ENCODE measurements at regions of chr17 and their contacts with region 1.

Region 1: DNA sequence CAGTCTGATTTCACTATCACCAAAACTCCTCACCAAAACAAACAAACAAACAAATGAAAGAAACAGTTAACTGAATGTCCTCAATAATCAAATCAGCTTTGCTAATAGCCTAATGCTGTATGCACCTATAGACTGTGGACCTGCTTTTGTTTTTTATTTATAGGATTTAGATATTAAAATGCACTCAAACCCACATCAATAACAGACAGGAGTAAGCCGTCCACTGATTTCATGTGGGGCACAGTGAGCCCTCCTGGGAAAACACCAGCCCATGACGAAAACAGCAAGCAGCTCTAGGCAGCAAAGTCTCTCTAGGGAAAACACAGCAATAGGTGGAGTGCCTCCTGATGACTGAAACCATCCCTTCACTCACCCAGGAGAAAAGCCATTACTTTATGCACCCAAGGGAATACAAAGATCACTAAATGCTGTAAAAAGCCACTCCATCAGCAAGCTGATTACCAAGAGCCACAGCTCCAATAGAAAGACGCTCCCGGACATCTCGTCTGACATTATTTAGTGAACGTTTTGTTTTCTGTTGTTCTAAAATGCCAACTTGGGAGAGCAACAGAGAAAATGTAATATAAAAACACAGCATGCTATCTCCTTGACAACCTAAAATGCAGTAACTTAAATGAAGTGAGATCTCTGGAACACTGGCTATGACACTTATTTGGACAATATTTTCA is 47.8 kb downstream of the ANKFY1 start:
- DNase-seq: no peak
- H3K4me3 ChIP-seq: no peak overlapping the region
- H3K27ac ChIP-seq: no peak overlapping the region
- H3K4me1 ChIP-seq: no peaks in the 10 kb centered on the region
- H3K27me3 ChIP-seq: no peaks in the 10 kb centered on the region
- CTCF ChIP-seq: no peak
- POLR2A ChIP-seq: no peak

Region 2: GRCh38 chr17:4263282-4264215 is 47.5 kb after region 1 on chr17 and contains the start of gene ANKFY1:
- intact Hi-C with region 1: loop called (anchors 10 kb)
- DNase-seq: peak; percentile 95 to 97
- H3K4me3 ChIP-seq: peak within 1 kb of the TSS; percentile 91 to 99 (median 98)
- H3K27ac ChIP-seq: peak within 1 kb of the TSS; percentile 30 to 70 (median 63)
- H3K4me1 ChIP-seq: peaks cover 12 to 19% of the 10 kb centered on the region in 2 donors
- H3K27me3 ChIP-seq: no peaks in the 10 kb centered on the region
- CTCF ChIP-seq: peak in 1 of 6 experiments; percentile 29
- POLR2A ChIP-seq: peak in 1 of 2 donors; percentile 75
- total RNA-seq, gene ANKFY1: 36.8 to 51.3 (median 46.3) TPM

Region 3: DNA sequence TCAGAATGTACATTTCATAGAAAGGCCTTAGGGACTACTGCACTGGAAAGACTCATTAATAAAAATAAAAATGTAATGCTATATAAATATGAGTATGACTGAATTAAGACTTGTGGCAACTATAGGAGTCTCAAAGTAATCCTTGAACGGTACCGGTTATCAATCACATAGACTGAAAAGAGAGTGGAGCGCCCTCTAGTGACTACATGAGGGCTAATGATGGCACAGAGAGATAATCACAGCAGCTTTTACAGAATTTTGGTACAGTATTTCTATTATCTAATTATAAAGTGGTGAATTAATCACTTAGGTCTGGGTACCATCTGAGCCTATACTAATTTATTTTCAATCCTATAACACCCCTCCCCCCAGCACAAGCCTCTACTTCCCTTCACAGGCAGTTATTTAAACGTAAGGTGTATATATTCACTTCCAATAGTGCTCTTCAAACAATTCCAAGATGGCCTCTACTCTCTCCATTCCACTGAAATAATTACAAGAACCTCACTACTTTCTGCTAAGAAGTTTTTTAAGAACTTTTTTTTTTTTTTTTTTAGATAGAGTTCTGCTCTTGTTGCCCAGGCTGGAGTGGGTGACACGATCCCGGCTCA is 88.5 kb after region 1 on chr17:
- intact Hi-C with region 1: loop called (anchors 5 kb)
- DNase-seq: peak; percentile 21 to 35
- H3K4me3 ChIP-seq: no peak overlapping the region
- H3K27ac ChIP-seq: no peak overlapping the region
- H3K4me1 ChIP-seq: peaks cover 0 to 3% of the 10 kb centered on the region in 2 donors
- H3K27me3 ChIP-seq: no peaks in the 10 kb centered on the region
- CTCF ChIP-seq: peak; percentile 18 to 76 (median 56)
- POLR2A ChIP-seq: no peak